Endothelial cell of umbilical vein (primary cell): ENCODE measurements at regions of chr12 and their contacts with region 1.

Region 1: GRCh38 chr12:111451649-111452129 is 46.0 kb downstream of the SH2B3 start:
- DNase-seq: peak; percentile 68
- H3K4me3 ChIP-seq: no peak overlapping the region
- H3K27ac ChIP-seq: no peak overlapping the region
- H3K4me1 ChIP-seq: peaks cover 19% of the 10 kb centered on the region
- H3K27me3 ChIP-seq: no peaks in the 10 kb centered on the region
- CTCF ChIP-seq: peak; percentile 60 to 66
- POLR2A ChIP-seq: no peak

Region 2: DNA sequence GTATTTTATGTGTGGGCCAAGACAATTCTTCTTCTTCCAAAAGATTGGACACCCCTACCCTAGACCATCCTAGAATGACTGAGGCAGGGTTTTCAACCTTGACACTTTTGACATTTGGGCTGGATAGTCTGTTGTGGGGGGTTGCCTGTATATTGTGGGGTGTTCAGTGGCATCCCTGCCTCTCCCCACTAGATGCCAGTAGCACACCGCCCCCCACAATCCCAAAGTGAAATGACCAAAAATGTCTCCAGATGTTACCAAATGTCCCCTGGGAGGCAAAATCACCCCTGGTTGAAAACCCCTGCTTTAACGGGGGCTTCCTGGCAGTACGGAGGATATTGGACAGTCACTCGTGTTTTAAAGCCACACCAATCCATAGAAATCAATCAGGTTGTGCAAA is 302.4 kb before region 1 on chr12:
- CTCF ChIA-PET with region 1: no interaction called
- POLR2A ChIA-PET with region 1: no interaction called
- dilution Hi-C with region 1: no loop called
- intact Hi-C with region 1: no loop called
- DNase-seq: no peak
- H3K4me3 ChIP-seq: no peak overlapping the region
- H3K27ac ChIP-seq: no peak overlapping the region
- H3K4me1 ChIP-seq: no peaks in the 10 kb centered on the region
- H3K27me3 ChIP-seq: peaks cover 4 to 7% of the 10 kb centered on the region in 2 experiments
- CTCF ChIP-seq: no peak
- POLR2A ChIP-seq: no peak

Region 3: DNA sequence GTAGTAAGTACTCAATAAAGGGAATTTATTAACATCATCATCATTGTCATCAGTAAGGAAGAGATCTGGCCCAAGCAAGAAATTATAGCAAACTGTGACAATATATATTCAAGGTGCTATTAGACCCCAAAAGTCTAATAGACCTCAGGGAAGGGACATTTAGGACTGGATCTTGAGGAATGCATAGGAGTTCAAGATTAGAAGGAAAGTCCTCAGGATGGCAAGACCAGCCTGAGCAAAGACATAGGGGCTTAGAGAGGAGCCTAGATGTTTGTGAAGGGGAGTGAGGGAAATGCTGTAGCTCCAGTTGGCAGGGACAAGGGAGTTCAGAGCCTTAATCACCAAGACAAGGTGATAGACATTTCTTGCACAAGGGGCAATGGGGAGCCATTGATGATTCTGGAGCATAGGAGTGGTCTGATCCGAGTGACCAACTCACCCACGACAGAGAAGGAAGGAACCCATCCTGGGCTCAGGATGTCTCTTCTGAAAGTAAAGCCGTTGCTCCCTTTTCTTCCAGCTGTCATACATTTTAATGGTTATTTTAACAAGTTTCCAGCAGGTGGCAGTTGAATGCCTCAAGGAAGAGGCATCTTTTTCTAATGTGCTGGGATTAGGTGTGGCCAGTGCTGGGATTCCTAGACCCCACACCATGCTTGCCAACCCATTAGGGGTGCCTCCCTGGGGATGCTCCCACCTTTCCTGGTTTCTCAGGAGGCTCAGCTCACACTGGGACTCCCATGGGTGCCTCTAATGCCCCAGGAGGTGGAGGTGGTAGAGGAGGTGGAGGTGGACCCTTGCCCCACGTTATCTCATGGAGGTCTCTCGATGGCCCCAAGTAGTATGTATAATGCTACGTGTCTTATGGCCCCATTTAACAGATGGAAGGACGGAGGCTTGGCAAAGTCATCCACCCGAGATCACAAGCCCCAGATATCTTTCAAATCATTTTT is 120.6 kb before region 1 on chr12:
- CTCF ChIA-PET with region 1: interaction called, 40 read pairs
- POLR2A ChIA-PET with region 1: no interaction called
- dilution Hi-C with region 1: no loop called
- intact Hi-C with region 1: loop called (anchors 1 kb)
- DNase-seq: peak; percentile 59
- H3K4me3 ChIP-seq: no peak overlapping the region
- H3K27ac ChIP-seq: no peak overlapping the region
- H3K4me1 ChIP-seq: no peaks in the 10 kb centered on the region
- H3K27me3 ChIP-seq: peaks cover 0 to 3% of the 10 kb centered on the region in 2 experiments
- CTCF ChIP-seq: peak; percentile 39 to 54
- POLR2A ChIP-seq: no peak

Region 4: DNA sequence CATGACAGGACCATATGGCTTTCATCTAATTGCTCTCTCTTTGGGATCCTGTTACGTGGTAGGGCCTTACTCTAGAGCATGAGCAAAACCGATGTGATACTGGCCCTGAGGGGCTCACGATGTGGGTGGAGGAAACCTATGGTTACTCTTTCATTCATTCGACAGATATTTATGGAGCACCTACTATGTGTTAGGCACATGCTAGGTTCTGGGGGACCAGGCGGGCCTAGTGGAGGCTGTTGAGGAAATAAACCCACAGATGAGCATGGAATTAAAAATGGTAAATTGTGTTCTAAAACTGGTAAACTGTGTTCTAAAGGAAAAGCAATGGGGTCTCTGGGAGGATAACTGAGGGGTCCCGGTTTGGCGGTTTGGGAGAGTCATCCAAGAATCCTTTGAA is 31.2 kb before region 1 on chr12:
- CTCF ChIA-PET with region 1: interaction called, 30 read pairs
- POLR2A ChIA-PET with region 1: no interaction called
- dilution Hi-C with region 1: no loop called
- intact Hi-C with region 1: no loop called
- DNase-seq: no peak
- H3K4me3 ChIP-seq: no peak overlapping the region
- H3K27ac ChIP-seq: no peak overlapping the region
- H3K4me1 ChIP-seq: peaks cover 19% of the 10 kb centered on the region
- H3K27me3 ChIP-seq: no peaks in the 10 kb centered on the region
- CTCF ChIP-seq: no peak
- POLR2A ChIP-seq: no peak

Region 5: DNA sequence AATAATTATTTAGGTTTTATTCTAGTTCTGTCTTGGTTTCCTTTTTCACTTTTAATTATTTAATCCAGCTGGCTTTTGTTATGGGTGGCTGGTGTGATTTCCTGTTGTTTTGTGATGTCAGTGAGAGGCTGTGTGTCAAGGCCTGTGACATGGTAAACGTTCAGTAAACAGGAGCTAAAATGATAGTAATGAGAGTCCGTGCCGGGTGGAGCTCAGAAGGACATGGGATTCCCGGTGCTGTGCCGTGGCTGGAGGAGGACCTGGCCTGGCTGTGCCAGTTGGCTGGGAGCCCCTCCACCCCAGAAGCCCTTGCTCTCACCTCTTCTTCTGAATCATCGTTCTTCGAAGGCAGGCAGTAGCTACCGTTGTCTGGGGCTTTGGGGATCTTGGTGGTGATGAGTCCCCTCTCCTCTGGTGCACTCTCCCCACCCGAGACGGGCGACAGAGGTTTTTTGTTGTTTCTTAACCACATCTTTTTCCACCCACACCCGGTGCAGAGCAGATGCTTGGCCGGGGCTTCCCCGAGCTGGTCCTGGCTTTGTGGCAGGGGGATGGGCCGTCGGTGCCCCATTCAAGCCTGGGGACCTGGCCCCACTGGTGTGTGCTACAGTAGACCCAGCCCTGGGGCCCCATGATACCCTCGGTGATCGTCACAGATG is 16.9 kb before region 1 on chr12:
- CTCF ChIA-PET with region 1: interaction called, 48 read pairs
- POLR2A ChIA-PET with region 1: interaction called, 3 read pairs
- dilution Hi-C with region 1: no loop called
- intact Hi-C with region 1: loop called (anchors 1 kb)
- DNase-seq: peak; percentile 83
- H3K4me3 ChIP-seq: peak overlapping the region in 1 of 3 experiments; percentile 27
- H3K27ac ChIP-seq: peak overlapping the region; percentile 85
- H3K4me1 ChIP-seq: peaks cover 90% of the 10 kb centered on the region
- H3K27me3 ChIP-seq: no peaks in the 10 kb centered on the region
- CTCF ChIP-seq: no peak
- POLR2A ChIP-seq: no peak

Region 6: DNA sequence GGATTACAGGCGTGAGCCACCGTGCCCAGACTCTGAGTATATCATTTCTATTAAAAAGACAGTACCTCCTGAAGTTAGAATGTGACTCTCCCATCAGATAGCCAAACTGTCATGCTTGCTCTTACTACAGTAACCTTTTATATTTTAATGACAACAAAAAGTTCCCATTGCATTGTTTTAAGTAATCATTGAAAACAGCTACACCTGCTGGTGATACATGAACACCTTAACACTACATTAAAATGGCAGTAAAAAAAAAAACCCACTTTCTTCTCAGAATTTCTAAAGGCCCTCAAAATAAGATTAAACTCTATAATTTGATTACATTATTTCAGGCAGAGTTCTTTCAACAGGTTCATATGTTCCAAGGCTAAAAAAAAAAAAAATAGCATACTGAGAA is 30.8 kb after region 1 on chr12:
- CTCF ChIA-PET with region 1: interaction called, 12 read pairs
- POLR2A ChIA-PET with region 1: no interaction called
- dilution Hi-C with region 1: no loop called
- intact Hi-C with region 1: no loop called
- DNase-seq: no peak
- H3K4me3 ChIP-seq: no peak overlapping the region
- H3K27ac ChIP-seq: no peak overlapping the region
- H3K4me1 ChIP-seq: no peaks in the 10 kb centered on the region
- H3K27me3 ChIP-seq: no peaks in the 10 kb centered on the region
- CTCF ChIP-seq: peak in 1 of 2 donors; percentile 16
- POLR2A ChIP-seq: no peak

Region 7: DNA sequence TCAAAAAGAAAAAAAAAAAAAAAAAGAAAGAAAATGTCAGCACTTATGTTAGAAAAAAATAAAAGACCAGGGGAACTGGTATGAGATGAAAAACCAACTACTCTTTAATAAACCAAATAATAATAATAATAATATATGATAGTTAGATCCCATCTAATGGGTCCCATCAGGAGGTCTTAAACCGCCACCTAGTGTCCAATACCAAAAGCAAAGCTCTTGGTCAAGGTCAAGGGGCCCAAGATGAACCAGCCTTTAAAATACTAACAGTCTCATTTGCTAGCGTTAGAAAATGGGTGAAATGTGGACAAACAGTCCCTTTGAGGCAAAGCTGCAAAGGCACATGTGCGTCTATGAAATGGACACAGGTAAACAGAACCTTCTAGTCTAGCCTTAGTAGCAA is 221.8 kb after region 1 on chr12:
- CTCF ChIA-PET with region 1: interaction called, 11 read pairs
- POLR2A ChIA-PET with region 1: no interaction called
- dilution Hi-C with region 1: no loop called
- intact Hi-C with region 1: no loop called
- DNase-seq: peak; percentile 31
- H3K4me3 ChIP-seq: no peak overlapping the region
- H3K27ac ChIP-seq: no peak overlapping the region
- H3K4me1 ChIP-seq: no peaks in the 10 kb centered on the region
- H3K27me3 ChIP-seq: no peaks in the 10 kb centered on the region
- CTCF ChIP-seq: peak; percentile 19 to 37
- POLR2A ChIP-seq: no peak